Aorta (tissue), 5 donors: ENCODE measurements at regions of chr5 and their contacts with region 1.

Region 1: DNA sequence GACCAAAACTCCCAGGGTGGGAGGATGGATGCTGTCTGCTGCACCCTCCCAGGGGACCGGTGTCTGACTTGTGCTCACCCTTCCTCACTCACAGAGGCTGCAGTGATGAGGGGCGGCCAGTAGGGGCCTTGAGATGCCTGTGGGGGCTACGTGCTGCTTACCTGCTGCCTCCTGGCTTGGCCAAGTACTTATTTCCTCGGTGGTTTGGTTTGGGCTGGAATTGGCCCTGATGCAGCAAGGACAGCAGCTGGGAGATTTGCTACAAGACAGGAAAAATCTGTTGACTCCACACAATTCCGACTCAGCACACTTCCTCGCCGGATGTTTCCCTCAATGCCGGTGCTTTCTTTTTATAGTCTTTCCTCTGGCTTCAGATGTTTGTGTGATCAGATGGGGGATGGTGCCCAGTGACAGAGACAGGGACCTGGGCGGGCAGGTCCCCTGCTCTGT is 6.6 kb downstream of the PCDH12 start:
- DNase-seq: no peak
- ATAC-seq: no peak
- H3K4me3 ChIP-seq: no peak overlapping the region
- H3K27ac ChIP-seq: no peak overlapping the region
- H3K4me1 ChIP-seq: no peaks in the 10 kb centered on the region
- H3K27me3 ChIP-seq: no peaks in the 10 kb centered on the region

Region 2: DNA sequence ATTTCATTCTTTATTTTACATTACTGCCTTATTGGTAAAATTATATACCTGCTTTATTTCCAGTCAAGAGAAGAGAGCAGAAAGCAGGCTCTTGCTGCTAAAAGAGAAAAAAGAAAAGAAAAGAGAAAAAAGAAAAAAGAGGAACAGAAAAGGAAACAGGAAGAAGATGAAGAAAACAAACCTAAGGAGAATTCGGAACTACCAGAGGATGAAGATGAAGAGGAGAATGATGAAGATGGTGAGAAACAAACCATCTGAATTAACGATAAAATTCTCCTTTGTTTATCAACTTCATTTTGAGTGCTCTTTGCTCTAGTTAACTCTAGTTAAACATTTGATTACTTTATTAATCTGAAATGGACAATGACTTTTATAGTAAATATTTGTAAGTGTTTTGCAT is 1427.4 kb before region 1 on chr5:
- intact Hi-C with region 1: no loop called
- DNase-seq: no peak
- ATAC-seq: no peak
- H3K4me3 ChIP-seq: no peak overlapping the region
- H3K27ac ChIP-seq: no peak overlapping the region
- H3K4me1 ChIP-seq: no peaks in the 10 kb centered on the region
- H3K27me3 ChIP-seq: no peaks in the 10 kb centered on the region

Region 3: GRCh38 chr5:141915881-141916336 is 35.4 kb before region 1 on chr5:
- intact Hi-C with region 1: loop called in 1 of 2 experiments (anchors 5 kb)
- DNase-seq: no peak
- ATAC-seq: no peak
- H3K4me3 ChIP-seq: no peak overlapping the region
- H3K27ac ChIP-seq: no peak overlapping the region
- H3K4me1 ChIP-seq: no peaks in the 10 kb centered on the region
- H3K27me3 ChIP-seq: no peaks in the 10 kb centered on the region

Region 4: GRCh38 chr5:142215915-142216681 is 264.7 kb after region 1 on chr5:
- intact Hi-C with region 1: no loop called
- DNase-seq: peak; percentile 88 to 89
- ATAC-seq: peak; percentile 91
- H3K4me3 ChIP-seq: no peak overlapping the region
- H3K27ac ChIP-seq: peak overlapping the region; percentile 50 to 87
- H3K4me1 ChIP-seq: peaks cover 4 to 8% of the 10 kb centered on the region in 2 donors
- H3K27me3 ChIP-seq: no peaks in the 10 kb centered on the region

Region 5: GRCh38 chr5:142263346-142263745 is 312.0 kb after region 1 on chr5:
- intact Hi-C with region 1: no loop called
- DNase-seq: no peak
- ATAC-seq: no peak
- H3K4me3 ChIP-seq: no peak overlapping the region
- H3K27ac ChIP-seq: no peak overlapping the region
- H3K4me1 ChIP-seq: no peaks in the 10 kb centered on the region
- H3K27me3 ChIP-seq: no peaks in the 10 kb centered on the region